ENCODE measurements at regions of chr3 and their contacts with region 1.

Region 1: GRCh38 chr3:33131331-33132018 is 17.7 kb downstream of the CRTAP start:
- DNase-seq: peak; percentile 44
- ATAC-seq: peak; percentile 85
- H3K4me3 ChIP-seq: no peak overlapping the region
- H3K27ac ChIP-seq: no peak overlapping the region
- H3K4me1 ChIP-seq: no peaks in the 10 kb centered on the region
- H3K27me3 ChIP-seq: no peaks in the 10 kb centered on the region
- CTCF ChIP-seq: peak; percentile 62 to 83 (median 77)
- POLR2A ChIP-seq: no peak
- RAD21 ChIP-seq: peak; percentile 92

Region 2: GRCh38 chr3:33144433-33144832 is 13.0 kb after region 1 on chr3:
- CTCF ChIA-PET with region 1: interaction called, 11 read pairs
- POLR2A ChIA-PET with region 1: interaction called, 3 read pairs
- RAD21 ChIA-PET with region 1: no interaction called
- intact Hi-C with region 1: no loop called
- DNase-seq: no peak
- ATAC-seq: peak; percentile 71
- H3K4me3 ChIP-seq: no peak overlapping the region
- H3K27ac ChIP-seq: no peak overlapping the region
- H3K4me1 ChIP-seq: peaks cover 12 to 15% of the 10 kb centered on the region in 2 experiments; a peak in 2 of 4 replicates
- H3K27me3 ChIP-seq: no peaks in the 10 kb centered on the region
- CTCF ChIP-seq: peak; percentile 4 to 77 (median 57); a peak in 4 of 6 replicates
- POLR2A ChIP-seq: no peak
- RAD21 ChIP-seq: peak; percentile 26; the same call in 1 of the 2 replicates

Region 3: DNA sequence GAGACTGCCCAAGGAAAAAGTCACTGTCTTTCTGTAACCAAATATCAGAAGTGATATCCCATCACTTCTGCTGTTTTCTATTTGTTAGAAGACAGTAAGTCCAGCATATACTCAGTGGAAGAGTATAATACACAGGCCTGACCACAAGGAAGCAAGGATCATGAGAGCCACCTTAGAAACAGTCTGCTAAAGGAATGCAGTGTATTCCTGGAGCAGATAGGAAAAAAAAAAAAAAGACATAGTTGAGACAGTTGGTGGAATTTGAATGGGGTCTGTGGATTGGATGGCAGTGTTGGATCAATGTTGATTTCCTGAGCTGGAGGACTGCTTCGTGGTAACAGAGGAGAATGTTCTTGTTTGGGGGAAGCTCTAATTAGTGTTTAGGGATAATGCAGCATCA is 119.2 kb after region 1 on chr3:
- CTCF ChIA-PET with region 1: interaction called, 3 read pairs
- POLR2A ChIA-PET with region 1: no interaction called
- RAD21 ChIA-PET with region 1: no interaction called
- intact Hi-C with region 1: loop called (anchors 5 kb)
- DNase-seq: no peak
- ATAC-seq: no peak
- H3K4me3 ChIP-seq: no peak overlapping the region
- H3K27ac ChIP-seq: no peak overlapping the region
- H3K4me1 ChIP-seq: no peaks in the 10 kb centered on the region
- H3K27me3 ChIP-seq: no peaks in the 10 kb centered on the region
- CTCF ChIP-seq: no peak
- POLR2A ChIP-seq: no peak
- RAD21 ChIP-seq: no peak

Region 4: GRCh38 chr3:33318709-33319380 is 187.4 kb after region 1 on chr3:
- CTCF ChIA-PET with region 1: interaction called, 5 read pairs
- POLR2A ChIA-PET with region 1: no interaction called
- RAD21 ChIA-PET with region 1: no interaction called
- intact Hi-C with region 1: loop called (anchors 1 kb)
- DNase-seq: no peak
- ATAC-seq: no peak
- H3K4me3 ChIP-seq: no peak overlapping the region
- H3K27ac ChIP-seq: no peak overlapping the region
- H3K4me1 ChIP-seq: peaks cover 11 to 26% of the 10 kb centered on the region in 2 experiments
- H3K27me3 ChIP-seq: no peaks in the 10 kb centered on the region
- CTCF ChIP-seq: peak in 2 of 3 experiments; percentile 4 to 23; a peak in 2 of 6 replicates
- POLR2A ChIP-seq: no peak
- RAD21 ChIP-seq: peak; percentile 43

Region 5: GRCh38 chr3:33372218-33373081 is 241.0 kb after region 1 on chr3:
- CTCF ChIA-PET with region 1: interaction called, 172 read pairs
- POLR2A ChIA-PET with region 1: no interaction called
- RAD21 ChIA-PET with region 1: interaction called, 24 to 38 read pairs
- intact Hi-C with region 1: loop called (anchors 1 kb)
- DNase-seq: peak; percentile 70
- ATAC-seq: peak; percentile 91
- H3K4me3 ChIP-seq: peak overlapping the region in 1 of 2 experiments; percentile 39; a peak in 2 of 4 replicates
- H3K27ac ChIP-seq: peak overlapping the region; percentile 6; the same call in 1 of the 2 replicates
- H3K4me1 ChIP-seq: peaks cover 4 to 15% of the 10 kb centered on the region in 2 experiments; a peak in 3 of 4 replicates
- H3K27me3 ChIP-seq: no peaks in the 10 kb centered on the region
- CTCF ChIP-seq: peak; percentile 88 to 98 (median 89)
- POLR2A ChIP-seq: no peak
- RAD21 ChIP-seq: peak; percentile 94

Region 6: DNA sequence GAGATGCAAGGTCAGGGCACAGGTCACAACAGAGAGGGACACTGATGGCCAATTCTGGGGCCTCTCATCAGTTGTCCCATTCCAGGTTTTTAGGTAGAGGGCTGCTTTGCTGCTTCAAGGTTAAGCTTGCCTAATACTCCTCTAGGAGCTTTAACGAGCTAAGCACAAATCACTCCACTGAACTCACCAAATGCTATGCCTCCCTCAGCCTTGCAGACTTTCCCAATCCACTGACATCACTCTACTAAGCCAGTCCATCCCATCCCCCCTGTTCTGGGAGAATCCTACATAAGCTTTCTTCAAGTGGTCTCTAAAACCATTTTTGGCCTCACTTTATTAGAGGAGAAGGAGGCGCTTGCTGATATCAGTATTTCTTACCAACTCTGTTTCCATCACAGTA is 642.2 kb after region 1 on chr3:
- CTCF ChIA-PET with region 1: interaction called, 10 read pairs
- POLR2A ChIA-PET with region 1: no interaction called
- RAD21 ChIA-PET with region 1: no interaction called
- intact Hi-C with region 1: no loop called
- DNase-seq: no peak
- ATAC-seq: no peak
- H3K4me3 ChIP-seq: no peak overlapping the region
- H3K27ac ChIP-seq: no peak overlapping the region
- H3K4me1 ChIP-seq: no peaks in the 10 kb centered on the region
- H3K27me3 ChIP-seq: no peaks in the 10 kb centered on the region
- CTCF ChIP-seq: no peak
- POLR2A ChIP-seq: no peak
- RAD21 ChIP-seq: no peak

Measured in HCT116 (cell line).